ENCODE measurements at regions of chr19 and their contacts with region 1.

Region 1: GRCh38 chr19:1672038-1672768 is 19.8 kb upstream of the TCF3 start:
- DNase-seq: peak in 8 of 9 donors; percentile 32 to 74 (median 60)
- ATAC-seq: peak; percentile 75
- H3K4me3 ChIP-seq: no peak overlapping the region
- H3K4me3 Mint-ChIP-seq: peak overlapping the region in 2 of 10 donors; percentile 40
- H3K27ac ChIP-seq: no peak overlapping the region
- H3K27ac Mint-ChIP-seq: no peak overlapping the region
- H3K4me1 ChIP-seq: peaks cover 0 to 12% of the 10 kb centered on the region in 2 donors
- H3K4me1 Mint-ChIP-seq: peaks cover 6 to 19% (median 10%) of the 10 kb centered on the region in 7 donors
- H3K27me3 ChIP-seq: peaks cover 2 to 21% of the 10 kb centered on the region in 2 donors
- H3K27me3 Mint-ChIP-seq: peaks cover 38 to 67% (median 45%) of the 10 kb centered on the region in 5 donors

Region 2: DNA sequence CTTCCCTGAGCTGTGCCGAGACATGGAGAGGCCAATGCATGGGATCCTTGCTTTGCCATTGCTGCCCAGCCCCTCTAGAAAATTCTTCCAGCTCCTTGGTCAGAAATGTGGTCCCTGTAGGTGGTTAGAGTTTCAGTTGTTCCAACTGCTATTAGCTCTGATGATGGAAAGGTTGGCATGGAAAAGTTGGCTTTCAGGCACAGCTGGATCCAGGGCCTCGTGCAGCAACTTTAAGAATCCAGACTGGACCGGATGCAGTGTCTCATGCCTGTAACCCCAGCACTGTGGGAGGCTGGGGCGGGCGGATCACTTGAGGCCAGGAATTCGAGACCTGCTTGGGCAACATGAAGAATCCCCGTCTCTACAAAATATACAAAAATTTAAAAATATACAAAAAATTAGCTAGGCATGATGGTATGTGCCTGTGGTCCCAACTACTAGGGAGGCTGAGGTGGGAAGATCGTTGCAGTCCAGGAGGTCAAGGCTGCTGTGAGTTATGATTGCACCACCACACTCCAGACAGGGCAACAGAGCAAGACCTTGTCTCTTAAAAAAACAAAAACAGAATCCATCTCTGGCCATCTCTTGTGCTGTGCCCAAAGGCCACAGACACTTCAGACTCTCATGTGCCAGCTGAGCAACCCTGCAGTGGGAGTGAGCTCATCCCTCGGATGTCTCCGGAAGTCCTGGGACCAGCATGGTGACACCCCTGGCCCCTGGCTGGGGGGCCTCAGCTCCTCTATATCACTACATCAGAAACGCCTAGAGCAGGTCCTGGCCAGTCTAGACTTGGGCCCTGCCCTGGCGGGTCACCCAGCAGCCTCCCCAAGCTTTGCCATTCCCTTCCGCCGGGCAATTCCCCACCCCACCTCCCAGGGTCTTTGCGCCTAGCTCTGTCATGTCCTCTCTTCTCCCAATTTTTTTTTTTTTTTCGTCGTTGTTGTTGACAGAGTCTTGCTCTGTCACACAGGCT is 120.8 kb before region 1 on chr19:
- CTCF ChIA-PET with region 1: interaction called, 9 read pairs
- POLR2A ChIA-PET with region 1: no interaction called
- intact Hi-C with region 1: loop called (anchors 1 to 2 kb)
- DNase-seq: no peak
- ATAC-seq: no peak
- H3K4me3 ChIP-seq: no peak overlapping the region
- H3K4me3 Mint-ChIP-seq: no peak overlapping the region
- H3K27ac ChIP-seq: no peak overlapping the region
- H3K27ac Mint-ChIP-seq: peak overlapping the region in 1 of 9 donors; percentile 25
- H3K4me1 ChIP-seq: peaks cover 0 to under 1% of the 10 kb centered on the region in 2 donors
- H3K4me1 Mint-ChIP-seq: peaks cover 0 to 2% (median under 1%) of the 10 kb centered on the region in 7 donors
- H3K27me3 ChIP-seq: no peaks in the 10 kb centered on the region
- H3K27me3 Mint-ChIP-seq: peaks cover 0 to 11% (median 5%) of the 10 kb centered on the region in 5 donors

Region 3: GRCh38 chr19:1624458-1624857 is 47.7 kb before region 1 on chr19:
- CTCF ChIA-PET with region 1: interaction called, 4 read pairs
- POLR2A ChIA-PET with region 1: no interaction called
- intact Hi-C with region 1: loop called (anchors 2 to 5 kb)
- DNase-seq: peak in 7 of 9 donors; percentile 37 to 56 (median 49)
- ATAC-seq: peak; percentile 82
- H3K4me3 ChIP-seq: no peak overlapping the region
- H3K4me3 Mint-ChIP-seq: no peak overlapping the region
- H3K27ac ChIP-seq: no peak overlapping the region
- H3K27ac Mint-ChIP-seq: peak overlapping the region in 4 of 9 donors; percentile 34 to 64 (median 50)
- H3K4me1 ChIP-seq: no peaks in the 10 kb centered on the region
- H3K4me1 Mint-ChIP-seq: peaks cover 0 to 7% (median 2%) of the 10 kb centered on the region in 7 donors
- H3K27me3 ChIP-seq: no peaks in the 10 kb centered on the region
- H3K27me3 Mint-ChIP-seq: no peaks in the 10 kb centered on the region

Region 4: DNA sequence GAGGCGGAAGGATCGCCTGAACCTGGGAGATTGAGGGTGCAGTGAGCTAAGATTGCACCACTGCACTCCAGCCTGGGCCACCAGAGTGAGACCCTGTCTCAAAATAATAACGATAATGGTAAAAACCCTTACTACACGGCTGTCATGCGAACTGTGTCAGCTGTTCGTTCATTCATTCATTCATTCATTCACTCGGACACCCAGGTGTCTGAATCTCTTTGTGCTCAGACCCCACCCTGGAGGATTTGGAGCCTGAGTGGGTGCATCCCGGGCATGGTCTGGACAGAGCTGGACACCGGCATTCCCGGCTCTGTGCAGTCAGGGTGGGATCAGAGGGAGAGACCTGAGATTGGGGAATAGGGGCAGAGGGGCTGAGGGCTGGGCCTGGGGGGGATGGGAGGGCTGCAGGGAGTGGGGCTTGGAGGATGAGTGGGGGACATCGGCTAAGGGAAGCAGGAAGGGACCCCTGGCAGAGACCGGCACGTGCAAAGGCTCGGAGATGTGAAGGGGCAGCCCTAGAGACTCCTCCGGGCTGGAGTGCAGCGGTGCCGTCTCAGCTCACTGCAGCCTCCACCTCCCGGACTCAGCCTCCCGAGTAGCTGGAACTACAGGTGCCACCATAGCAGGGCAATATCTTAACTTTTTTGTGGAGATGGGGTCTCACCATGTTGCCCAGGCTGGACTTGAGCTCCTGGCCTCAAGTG is 11.8 kb after region 1 on chr19:
- CTCF ChIA-PET with region 1: no interaction called
- POLR2A ChIA-PET with region 1: no interaction called
- intact Hi-C with region 1: no loop called
- DNase-seq: no peak
- ATAC-seq: no peak
- H3K4me3 ChIP-seq: no peak overlapping the region
- H3K4me3 Mint-ChIP-seq: no peak overlapping the region
- H3K27ac ChIP-seq: no peak overlapping the region
- H3K27ac Mint-ChIP-seq: no peak overlapping the region
- H3K4me1 ChIP-seq: no peaks in the 10 kb centered on the region
- H3K4me1 Mint-ChIP-seq: peaks cover 0 to 9% (median 0%) of the 10 kb centered on the region in 7 donors
- H3K27me3 ChIP-seq: no peaks in the 10 kb centered on the region
- H3K27me3 Mint-ChIP-seq: peaks cover 10 to 55% (median 33%) of the 10 kb centered on the region in 5 donors

Region 5: GRCh38 chr19:1767464-1767933 is 95.3 kb after region 1 on chr19:
- CTCF ChIA-PET with region 1: interaction called, 5 read pairs
- POLR2A ChIA-PET with region 1: no interaction called
- intact Hi-C with region 1: loop called (anchors 1 kb)
- DNase-seq: peak; percentile 26 to 77 (median 60)
- ATAC-seq: peak; percentile 89
- H3K4me3 ChIP-seq: no peak overlapping the region
- H3K4me3 Mint-ChIP-seq: no peak overlapping the region
- H3K27ac ChIP-seq: no peak overlapping the region
- H3K27ac Mint-ChIP-seq: no peak overlapping the region
- H3K4me1 ChIP-seq: no peaks in the 10 kb centered on the region
- H3K4me1 Mint-ChIP-seq: no peaks in the 10 kb centered on the region
- H3K27me3 ChIP-seq: peaks cover 13 to 16% of the 10 kb centered on the region in 2 donors
- H3K27me3 Mint-ChIP-seq: peaks cover 58 to 86% (median 66%) of the 10 kb centered on the region in 5 donors

Region 6: DNA sequence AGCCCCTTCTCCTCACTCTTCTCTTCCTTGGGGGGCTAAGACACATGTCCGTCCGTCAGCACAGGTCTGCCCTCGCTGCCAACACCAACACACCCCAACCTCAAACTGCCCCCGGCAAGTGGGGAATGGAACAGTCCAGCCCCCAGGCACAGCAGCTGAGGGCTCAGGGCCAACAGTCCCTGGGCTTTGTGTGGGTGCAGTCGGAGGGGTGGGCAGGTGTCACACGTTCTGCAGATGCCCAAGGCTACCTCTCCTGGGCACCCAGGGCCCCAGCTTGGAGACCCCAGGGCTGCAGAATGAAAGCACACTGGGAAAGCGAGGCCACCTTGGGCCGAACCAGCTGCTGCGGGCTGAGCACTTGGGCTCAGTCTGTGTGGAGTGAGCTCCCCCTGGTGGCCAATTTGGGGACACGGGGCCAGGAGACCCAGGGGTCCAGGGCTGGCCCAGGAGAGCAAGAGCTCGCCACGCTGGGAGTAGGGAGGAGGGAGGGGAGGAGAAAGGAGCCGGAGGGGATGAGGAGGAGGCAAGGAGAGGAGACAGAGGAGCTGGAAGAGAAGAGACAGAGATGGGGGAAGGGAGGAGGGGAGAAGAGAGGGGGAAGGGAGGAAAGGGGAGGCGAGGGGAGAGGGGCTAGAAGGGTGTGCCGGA is 153.8 kb after region 1 on chr19:
- CTCF ChIA-PET with region 1: interaction called, 5 read pairs
- POLR2A ChIA-PET with region 1: no interaction called
- intact Hi-C with region 1: loop called in 1 of 2 experiments (anchors 1 kb)
- DNase-seq: peak; percentile 55 to 81 (median 71)
- ATAC-seq: peak; percentile 85
- H3K4me3 ChIP-seq: no peak overlapping the region
- H3K4me3 Mint-ChIP-seq: no peak overlapping the region
- H3K27ac ChIP-seq: no peak overlapping the region
- H3K27ac Mint-ChIP-seq: peak overlapping the region in 2 of 9 donors; percentile 5 to 71
- H3K4me1 ChIP-seq: peaks cover 3 to 6% of the 10 kb centered on the region in 2 donors
- H3K4me1 Mint-ChIP-seq: peaks cover 0 to 5% (median 0%) of the 10 kb centered on the region in 7 donors
- H3K27me3 ChIP-seq: no peaks in the 10 kb centered on the region
- H3K27me3 Mint-ChIP-seq: no peaks in the 10 kb centered on the region

Region 7: DNA sequence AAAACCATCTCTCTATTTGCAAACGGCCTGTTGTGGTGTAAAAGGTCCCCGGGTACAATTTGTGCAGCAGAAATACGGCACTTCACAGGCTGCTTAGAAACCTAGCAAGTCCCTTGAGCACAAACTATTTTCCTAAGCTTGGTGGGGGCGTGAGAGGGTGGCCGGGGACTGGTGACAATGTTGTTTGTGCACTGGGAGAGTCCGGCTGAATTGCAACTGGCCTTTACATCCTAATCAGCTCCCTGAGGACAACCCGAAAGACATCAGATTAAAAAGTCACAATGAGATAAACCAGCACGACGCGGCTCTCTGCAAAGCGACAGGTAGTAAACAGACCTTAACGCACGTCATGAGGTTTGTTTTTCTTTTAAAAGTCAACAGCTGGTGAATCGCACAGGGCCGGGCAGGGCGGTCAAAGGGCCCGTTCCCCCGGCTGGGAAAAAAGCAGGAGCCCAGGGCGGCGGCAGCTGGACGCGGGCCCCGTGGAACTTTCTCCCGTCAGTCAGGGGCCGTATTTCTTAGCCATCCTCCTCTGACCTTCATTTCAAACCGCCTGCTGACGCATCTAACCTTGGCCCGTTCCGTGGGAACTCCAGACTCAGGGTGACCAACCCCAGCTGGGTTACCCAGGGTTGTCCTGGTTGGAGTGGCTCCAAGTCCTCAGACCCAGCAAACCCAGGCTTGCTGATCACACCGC is 916.0 kb after region 1 on chr19:
- CTCF ChIA-PET with region 1: no interaction called
- POLR2A ChIA-PET with region 1: no interaction called
- intact Hi-C with region 1: no loop called
- DNase-seq: no peak
- ATAC-seq: no peak
- H3K4me3 ChIP-seq: no peak overlapping the region
- H3K4me3 Mint-ChIP-seq: no peak overlapping the region
- H3K27ac ChIP-seq: no peak overlapping the region
- H3K27ac Mint-ChIP-seq: no peak overlapping the region
- H3K4me1 ChIP-seq: no peaks in the 10 kb centered on the region
- H3K4me1 Mint-ChIP-seq: peaks cover 0 to 4% (median 0%) of the 10 kb centered on the region in 7 donors
- H3K27me3 ChIP-seq: no peaks in the 10 kb centered on the region
- H3K27me3 Mint-ChIP-seq: peaks cover 0 to 44% (median 0%) of the 10 kb centered on the region in 5 donors

Measured in naive thymus-derived CD4-positive, alpha-beta T cell (primary cell).